Naive thymus-derived CD4-positive, alpha-beta T cell (primary cell): ENCODE measurements at regions of chr5 and their contacts with region 1.

Region 1: GRCh38 chr5:149455889-149456409 is 76.9 kb upstream of the IL17B start:
- DNase-seq: no peak
- ATAC-seq: no peak
- H3K4me3 ChIP-seq: no peak overlapping the region
- H3K4me3 Mint-ChIP-seq: no peak overlapping the region
- H3K27ac ChIP-seq: no peak overlapping the region
- H3K27ac Mint-ChIP-seq: peak overlapping the region in 1 of 9 donors; percentile 12
- H3K4me1 ChIP-seq: no peaks in the 10 kb centered on the region
- H3K4me1 Mint-ChIP-seq: peaks cover 0 to 2% (median 0%) of the 10 kb centered on the region in 7 donors
- H3K27me3 ChIP-seq: no peaks in the 10 kb centered on the region
- H3K27me3 Mint-ChIP-seq: no peaks in the 10 kb centered on the region

Region 2: GRCh38 chr5:149422366-149423048 is 33.4 kb before region 1 on chr5:
- CTCF ChIA-PET with region 1: no interaction called
- POLR2A ChIA-PET with region 1: no interaction called
- intact Hi-C with region 1: loop called in 1 of 2 experiments (anchors 5 kb)
- DNase-seq: peak in 5 of 9 donors; percentile 23 to 43 (median 27)
- ATAC-seq: peak; percentile 57
- H3K4me3 ChIP-seq: no peak overlapping the region
- H3K4me3 Mint-ChIP-seq: peak overlapping the region in 7 of 10 donors; percentile 9 to 61 (median 39)
- H3K27ac ChIP-seq: no peak overlapping the region
- H3K27ac Mint-ChIP-seq: peak overlapping the region in 5 of 9 donors; percentile 13 to 84 (median 51)
- H3K4me1 ChIP-seq: peaks cover 0 to 13% of the 10 kb centered on the region in 2 donors
- H3K4me1 Mint-ChIP-seq: peaks cover 0 to 18% (median 11%) of the 10 kb centered on the region in 7 donors
- H3K27me3 ChIP-seq: no peaks in the 10 kb centered on the region
- H3K27me3 Mint-ChIP-seq: peaks cover 0 to 2% (median 0%) of the 10 kb centered on the region in 5 donors